HEK293 (cell line): ENCODE measurements at regions of chr14 and their contacts with region 1.

Region 1: GRCh38 chr14:102088012-102088792 is 1.4 kb upstream of the HSP90AA1 start:
- H3K4me3 ChIP-seq: no peak overlapping the region
- H3K27ac ChIP-seq: peak overlapping the region; percentile 98; the same call in 1 of the 2 replicates
- H3K4me1 ChIP-seq: peaks cover 8% of the 10 kb centered on the region; the same call in 1 of the 2 replicates
- CTCF ChIP-seq: no peak

Region 2: DNA sequence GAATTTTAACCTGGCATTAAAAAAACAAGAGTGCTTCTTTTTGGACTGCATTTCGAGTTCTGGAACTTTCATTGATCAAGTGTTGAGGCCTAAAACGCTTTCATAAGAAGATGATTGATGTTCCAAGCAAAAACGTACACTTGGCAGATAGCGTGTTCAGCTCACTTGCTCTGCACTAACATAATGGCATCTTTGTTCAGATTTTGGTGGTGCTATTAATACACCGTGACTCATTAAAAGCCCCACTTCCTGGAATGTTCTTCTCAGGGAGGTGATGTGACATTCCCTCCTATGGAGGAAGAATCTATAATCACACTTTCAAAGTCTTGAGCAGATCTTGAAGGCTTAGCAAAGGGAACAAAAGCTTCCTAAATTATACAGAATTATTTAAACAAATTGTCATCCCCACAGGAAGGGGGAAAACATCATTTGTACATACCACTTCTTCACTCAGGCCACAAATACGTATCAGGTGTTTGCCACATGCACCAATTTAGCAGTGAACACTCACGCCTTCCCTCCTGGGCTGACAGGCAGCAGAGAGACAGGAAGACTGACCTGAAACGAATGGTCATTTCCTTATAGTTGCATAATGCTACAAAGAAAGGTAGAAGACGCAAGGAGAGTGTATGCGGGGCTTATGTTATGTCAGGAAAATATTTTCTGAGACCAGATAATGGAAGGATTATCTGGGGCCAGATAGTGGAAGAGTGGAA is 16.8 kb before region 1 on chr14:
- CTCF ChIA-PET with region 1: interaction called, 3 read pairs
- POLR2A ChIA-PET with region 1: interaction called, 15 read pairs
- H3K4me3 ChIP-seq: no peak overlapping the region
- H3K27ac ChIP-seq: no peak overlapping the region
- H3K4me1 ChIP-seq: no peaks in the 10 kb centered on the region
- CTCF ChIP-seq: no peak